Caco-2 (cell line): ENCODE measurements at regions of chr7 and their contacts with region 1.

Region 1: DNA sequence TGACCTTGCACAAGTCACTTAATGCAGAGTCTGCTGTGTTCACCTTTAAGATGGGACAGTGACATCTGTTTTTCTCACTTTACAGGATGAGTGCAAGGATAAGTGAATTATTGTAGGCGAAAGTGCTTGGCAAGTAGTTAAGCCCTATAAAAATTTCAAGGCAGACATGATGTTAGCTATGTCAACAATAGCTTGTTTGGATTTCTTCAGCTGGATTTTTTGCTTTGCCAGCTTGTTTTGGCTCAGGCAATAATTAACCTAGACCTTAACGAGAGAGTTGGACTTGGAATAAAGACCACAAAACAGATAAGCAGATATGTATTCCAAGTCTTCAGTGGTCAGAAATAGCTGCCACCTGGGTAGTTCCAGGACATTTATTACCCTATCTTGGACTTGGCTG is 255.2 kb downstream of the ARL4A start:
- DNase-seq: peak; percentile 39 to 62
- H3K4me3 ChIP-seq: no peak overlapping the region
- H3K4me3 Mint-ChIP-seq: peak overlapping the region; percentile 21
- H3K27ac Mint-ChIP-seq: no peak overlapping the region
- H3K4me1 ChIP-seq: peaks cover 37% of the 10 kb centered on the region
- H3K4me1 Mint-ChIP-seq: peaks cover 44% of the 10 kb centered on the region
- H3K27me3 ChIP-seq: no peaks in the 10 kb centered on the region
- H3K27me3 Mint-ChIP-seq: no peaks in the 10 kb centered on the region
- CTCF ChIP-seq: no peak

Region 2: GRCh38 chr7:12929476-12930140 is 13.0 kb before region 1 on chr7:
- CTCF ChIA-PET with region 1: no interaction called
- POLR2A ChIA-PET with region 1: interaction called, 9 read pairs
- intact Hi-C with region 1: loop called (anchors 2 kb)
- DNase-seq: no peak
- H3K4me3 ChIP-seq: no peak overlapping the region
- H3K4me3 Mint-ChIP-seq: peak overlapping the region; percentile 90
- H3K27ac Mint-ChIP-seq: peak overlapping the region; percentile 85
- H3K4me1 ChIP-seq: peaks cover 42% of the 10 kb centered on the region
- H3K4me1 Mint-ChIP-seq: peaks cover 37% of the 10 kb centered on the region
- H3K27me3 ChIP-seq: no peaks in the 10 kb centered on the region
- H3K27me3 Mint-ChIP-seq: no peaks in the 10 kb centered on the region
- CTCF ChIP-seq: no peak